ENCODE measurements at regions of chr5 and their contacts with region 1.

Region 1: DNA sequence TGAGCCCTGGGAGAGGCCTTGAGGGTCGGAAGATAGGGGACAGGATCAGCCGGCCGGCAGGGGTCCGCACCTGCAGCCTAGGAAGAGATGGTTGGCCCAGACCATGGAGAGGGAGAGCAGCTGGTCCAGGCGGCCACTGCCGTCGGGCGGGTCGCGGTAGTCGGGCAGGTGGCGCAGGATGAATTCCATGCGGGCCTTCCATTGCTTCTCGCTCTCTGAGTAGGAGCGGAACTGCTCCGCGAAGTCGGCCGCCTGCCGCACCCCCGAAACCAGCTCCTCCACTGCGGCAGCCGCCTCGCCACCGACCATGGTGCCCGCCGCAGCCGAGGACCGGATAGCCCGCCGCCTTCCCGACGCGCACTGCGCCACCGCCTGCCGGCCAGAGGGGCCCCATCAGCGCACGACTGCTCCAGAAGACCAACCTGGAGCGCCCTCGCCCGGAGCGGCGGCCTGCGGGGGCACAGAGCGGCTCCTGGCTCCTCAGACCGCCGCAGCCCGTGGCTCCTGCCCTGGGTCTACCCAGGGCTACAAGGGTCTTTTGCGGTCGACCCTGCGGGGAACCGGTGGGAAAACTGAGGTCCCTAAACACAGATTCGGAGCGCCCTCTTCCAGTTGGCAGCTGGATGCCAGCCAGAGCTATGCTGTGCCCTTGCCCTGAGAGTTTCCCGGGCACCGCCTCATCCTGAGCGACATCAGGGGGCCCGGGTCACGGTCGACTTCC is at the start of gene CDKN2AIPNL:
- DNase-seq: peak; percentile 94 to 95 (median 95)
- ATAC-seq: peak; percentile 86 to 94 (median 90)
- H3K4me3 ChIP-seq: peak within 1 kb of the TSS; percentile 69 to 95 (median 77)
- H3K27ac ChIP-seq: peak within 1 kb of the TSS; percentile 85 to 91 (median 88)
- H3K4me1 ChIP-seq: peaks cover 0 to 33% (median 12%) of the 10 kb centered on the region in 4 donors
- H3K27me3 ChIP-seq: no peaks in the 10 kb centered on the region
- CTCF ChIP-seq: peak; percentile 77 to 97 (median 82)
- POLR2A ChIP-seq: peak; percentile 78
- total RNA-seq, gene CDKN2AIPNL: 5.1 to 10.8 (median 7.8) TPM

Region 2: DNA sequence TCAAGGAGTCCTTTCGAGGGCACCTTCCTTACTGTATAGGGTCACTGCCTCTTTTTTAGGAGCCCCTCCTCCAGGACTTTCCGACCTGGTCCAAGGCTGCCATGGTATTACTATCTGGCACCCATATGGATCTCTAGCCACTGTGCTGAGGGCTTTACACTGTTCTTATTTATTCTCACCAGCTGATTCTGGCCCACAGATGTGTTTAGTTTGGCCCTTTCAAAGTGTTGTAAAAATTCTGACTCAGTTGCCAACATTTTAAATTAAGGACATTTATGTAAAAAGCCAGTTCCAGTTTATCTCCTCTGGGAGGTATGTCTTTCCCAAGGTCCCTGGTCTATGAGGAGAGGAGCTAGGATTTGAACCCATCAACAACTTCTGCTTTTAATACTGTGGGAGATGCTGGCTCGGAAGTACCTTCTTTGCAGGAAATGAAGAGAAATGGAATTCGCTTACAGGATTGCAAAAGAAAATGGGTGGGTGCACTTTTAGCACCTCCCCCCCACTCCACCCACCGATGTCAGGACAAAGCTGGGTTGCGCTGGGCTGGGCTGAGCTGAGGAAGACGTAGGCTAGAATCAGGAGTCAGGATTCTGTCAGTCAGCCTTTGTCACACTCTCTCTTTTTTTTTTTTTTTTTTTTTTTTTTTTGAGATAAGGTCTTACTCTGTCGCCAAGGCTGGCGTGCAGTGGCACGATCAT is 121.6 kb after region 1 on chr5:
- intact Hi-C with region 1: loop called in 1 of 2 experiments (anchors 10 kb)
- DNase-seq: no peak
- ATAC-seq: peak; percentile 13 to 61 (median 40)
- H3K4me3 ChIP-seq: no peak overlapping the region
- H3K27ac ChIP-seq: no peak overlapping the region
- H3K4me1 ChIP-seq: peaks cover 0 to 27% (median 11%) of the 10 kb centered on the region in 4 donors
- H3K27me3 ChIP-seq: no peaks in the 10 kb centered on the region
- CTCF ChIP-seq: no peak
- POLR2A ChIP-seq: no peak

Measured in right lobe of liver (tissue), 6 donors.